ENCODE measurements at regions of chr1 and their contacts with region 1.

Region 1: GRCh38 chr1:173202430-173203145 is 4.5 kb downstream of the TNFSF4 start:
- DNase-seq: peak; percentile 90
- H3K4me3 ChIP-seq: peak overlapping the region; percentile 9 to 98 (median 91)
- H3K27ac ChIP-seq: peak overlapping the region; percentile 87
- H3K4me1 ChIP-seq: peaks cover 47% of the 10 kb centered on the region
- H3K27me3 ChIP-seq: no peaks in the 10 kb centered on the region
- CTCF ChIP-seq: peak; percentile 39 to 59
- POLR2A ChIP-seq: no peak

Region 2: GRCh38 chr1:172778456-172779455 is 423.8 kb before region 1 on chr1:
- CTCF ChIA-PET with region 1: interaction called, 11 read pairs
- POLR2A ChIA-PET with region 1: no interaction called
- dilution Hi-C with region 1: no loop called
- intact Hi-C with region 1: no loop called
- DNase-seq: no peak
- H3K4me3 ChIP-seq: no peak overlapping the region
- H3K27ac ChIP-seq: no peak overlapping the region
- H3K4me1 ChIP-seq: no peaks in the 10 kb centered on the region
- H3K27me3 ChIP-seq: no peaks in the 10 kb centered on the region
- CTCF ChIP-seq: no peak
- POLR2A ChIP-seq: no peak

Region 3: GRCh38 chr1:172928412-172928811 is 274.2 kb before region 1 on chr1:
- CTCF ChIA-PET with region 1: interaction called, 11 read pairs
- POLR2A ChIA-PET with region 1: interaction called, 3 read pairs
- dilution Hi-C with region 1: no loop called
- intact Hi-C with region 1: no loop called
- DNase-seq: peak; percentile 65
- H3K4me3 ChIP-seq: no peak overlapping the region
- H3K27ac ChIP-seq: peak overlapping the region; percentile 7
- H3K4me1 ChIP-seq: peaks cover 34% of the 10 kb centered on the region
- H3K27me3 ChIP-seq: no peaks in the 10 kb centered on the region
- CTCF ChIP-seq: no peak
- POLR2A ChIP-seq: no peak

Region 4: DNA sequence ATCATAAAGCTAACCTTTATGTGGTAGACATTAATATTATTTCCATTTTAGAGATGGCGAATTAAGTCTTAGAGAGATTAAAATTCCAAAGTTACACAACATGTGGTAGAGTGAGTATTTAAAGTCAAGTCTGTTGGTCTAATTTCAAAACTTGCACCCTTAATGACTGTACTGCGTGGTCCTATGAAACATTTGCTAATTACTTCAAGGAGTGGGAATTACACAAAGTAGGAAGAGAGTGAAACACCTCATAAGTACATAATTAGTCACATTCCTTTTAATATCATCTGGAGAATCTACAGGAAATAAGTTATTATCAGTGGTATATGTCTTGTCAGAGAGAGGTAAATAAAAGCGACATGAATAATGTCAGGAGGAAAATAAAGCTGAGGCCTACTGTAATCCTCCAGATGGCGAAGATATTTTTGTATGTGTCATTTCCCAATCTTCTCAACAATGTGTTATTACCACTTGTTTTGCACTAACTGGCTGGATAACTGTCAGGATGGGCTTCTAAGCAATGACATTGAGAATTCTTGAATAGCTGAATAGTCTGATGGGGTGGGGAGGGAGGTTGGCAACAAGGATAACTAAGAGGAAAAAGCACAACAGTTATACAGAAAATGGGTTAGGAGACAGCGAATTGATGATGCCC is 247.3 kb before region 1 on chr1:
- CTCF ChIA-PET with region 1: interaction called, 12 read pairs
- POLR2A ChIA-PET with region 1: interaction called, 3 read pairs
- dilution Hi-C with region 1: loop called (anchors 25 kb)
- intact Hi-C with region 1: loop called (anchors 1 kb)
- DNase-seq: peak; percentile 85
- H3K4me3 ChIP-seq: no peak overlapping the region
- H3K27ac ChIP-seq: peak overlapping the region; percentile 90
- H3K4me1 ChIP-seq: peaks cover 43% of the 10 kb centered on the region
- H3K27me3 ChIP-seq: no peaks in the 10 kb centered on the region
- CTCF ChIP-seq: no peak
- POLR2A ChIP-seq: peak; percentile 33

Region 5: DNA sequence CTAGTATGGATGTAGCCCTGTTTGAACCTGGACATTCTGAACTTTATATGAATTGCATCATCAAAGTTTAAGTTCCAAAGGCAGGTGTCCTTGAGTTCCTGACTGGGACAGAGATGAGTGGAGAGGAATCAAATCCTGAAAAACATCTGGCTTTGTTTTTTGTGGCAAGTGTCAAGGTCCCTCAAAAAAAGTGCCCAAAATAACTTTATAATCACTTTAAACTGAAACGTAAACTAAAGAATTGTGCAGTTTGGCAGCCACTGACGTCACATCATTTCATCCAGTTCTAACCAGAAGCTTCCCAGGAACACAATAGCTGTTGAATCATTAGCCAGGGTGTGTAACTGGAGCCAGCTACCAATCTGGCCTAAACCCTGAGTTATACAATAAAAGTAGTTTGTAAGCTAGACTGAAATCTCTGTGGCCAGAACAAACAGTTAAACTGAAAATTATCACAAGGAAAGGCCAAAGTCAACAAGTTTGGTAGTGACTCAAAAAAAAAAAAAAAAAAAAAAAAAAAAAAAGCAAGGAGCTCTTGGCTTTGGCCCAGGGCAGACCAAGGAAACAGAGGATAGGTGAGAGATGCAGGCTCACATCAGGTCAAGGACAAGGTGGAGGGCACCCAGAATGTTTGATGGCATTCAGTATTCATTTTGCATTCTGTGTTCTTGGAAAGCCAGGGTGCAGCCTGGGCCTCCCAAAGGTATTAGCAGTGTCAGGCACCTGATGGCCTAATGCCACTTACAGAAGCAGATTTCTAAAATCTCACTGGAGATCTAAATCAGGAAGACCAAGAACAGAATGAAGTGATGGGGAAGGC is 226.2 kb before region 1 on chr1:
- CTCF ChIA-PET with region 1: interaction called, 11 read pairs
- POLR2A ChIA-PET with region 1: no interaction called
- dilution Hi-C with region 1: loop called (anchors 25 kb)
- intact Hi-C with region 1: no loop called
- DNase-seq: peak; percentile 79
- H3K4me3 ChIP-seq: no peak overlapping the region
- H3K27ac ChIP-seq: peak overlapping the region; percentile 72
- H3K4me1 ChIP-seq: peaks cover 31% of the 10 kb centered on the region
- H3K27me3 ChIP-seq: no peaks in the 10 kb centered on the region
- CTCF ChIP-seq: no peak
- POLR2A ChIP-seq: no peak

Region 6: GRCh38 chr1:173190101-173190906 is 12.3 kb before region 1 on chr1:
- CTCF ChIA-PET with region 1: interaction called, 42 read pairs
- POLR2A ChIA-PET with region 1: interaction called, 3 read pairs
- dilution Hi-C with region 1: no loop called
- intact Hi-C with region 1: no loop called
- DNase-seq: peak; percentile 99
- H3K4me3 ChIP-seq: no peak overlapping the region
- H3K27ac ChIP-seq: peak overlapping the region; percentile 98
- H3K4me1 ChIP-seq: peaks cover 58% of the 10 kb centered on the region
- H3K27me3 ChIP-seq: no peaks in the 10 kb centered on the region
- CTCF ChIP-seq: no peak
- POLR2A ChIP-seq: peak; percentile 35

Region 7: GRCh38 chr1:173330149-173330951 is 127.8 kb after region 1 on chr1:
- CTCF ChIA-PET with region 1: no interaction called
- POLR2A ChIA-PET with region 1: no interaction called
- dilution Hi-C with region 1: no loop called
- intact Hi-C with region 1: no loop called
- DNase-seq: peak; percentile 59
- H3K4me3 ChIP-seq: no peak overlapping the region
- H3K27ac ChIP-seq: no peak overlapping the region
- H3K4me1 ChIP-seq: peaks cover 15% of the 10 kb centered on the region
- H3K27me3 ChIP-seq: no peaks in the 10 kb centered on the region
- CTCF ChIP-seq: no peak
- POLR2A ChIP-seq: no peak

Region 8: GRCh38 chr1:173420330-173420806 is 217.8 kb after region 1 on chr1:
- CTCF ChIA-PET with region 1: interaction called, 4 read pairs
- POLR2A ChIA-PET with region 1: no interaction called
- dilution Hi-C with region 1: no loop called
- intact Hi-C with region 1: loop called (anchors 2 kb)
- DNase-seq: peak; percentile 83
- H3K4me3 ChIP-seq: no peak overlapping the region
- H3K27ac ChIP-seq: no peak overlapping the region
- H3K4me1 ChIP-seq: peaks cover 5% of the 10 kb centered on the region
- H3K27me3 ChIP-seq: no peaks in the 10 kb centered on the region
- CTCF ChIP-seq: peak; percentile 63 to 76
- POLR2A ChIP-seq: no peak

Measured in endothelial cell of umbilical vein (primary cell).